Endothelial cell of umbilical vein (primary cell): ENCODE measurements at regions of chr2 and their contacts with region 1.

Region 1: GRCh38 chr2:55885129-55885943 is 38.2 kb downstream of the EFEMP1 start:
- DNase-seq: peak; percentile 95
- H3K4me3 ChIP-seq: no peak overlapping the region
- H3K27ac ChIP-seq: peak overlapping the region; percentile 97
- H3K4me1 ChIP-seq: peaks cover 96% of the 10 kb centered on the region
- H3K27me3 ChIP-seq: no peaks in the 10 kb centered on the region
- CTCF ChIP-seq: no peak
- POLR2A ChIP-seq: peak; percentile 88

Region 2: DNA sequence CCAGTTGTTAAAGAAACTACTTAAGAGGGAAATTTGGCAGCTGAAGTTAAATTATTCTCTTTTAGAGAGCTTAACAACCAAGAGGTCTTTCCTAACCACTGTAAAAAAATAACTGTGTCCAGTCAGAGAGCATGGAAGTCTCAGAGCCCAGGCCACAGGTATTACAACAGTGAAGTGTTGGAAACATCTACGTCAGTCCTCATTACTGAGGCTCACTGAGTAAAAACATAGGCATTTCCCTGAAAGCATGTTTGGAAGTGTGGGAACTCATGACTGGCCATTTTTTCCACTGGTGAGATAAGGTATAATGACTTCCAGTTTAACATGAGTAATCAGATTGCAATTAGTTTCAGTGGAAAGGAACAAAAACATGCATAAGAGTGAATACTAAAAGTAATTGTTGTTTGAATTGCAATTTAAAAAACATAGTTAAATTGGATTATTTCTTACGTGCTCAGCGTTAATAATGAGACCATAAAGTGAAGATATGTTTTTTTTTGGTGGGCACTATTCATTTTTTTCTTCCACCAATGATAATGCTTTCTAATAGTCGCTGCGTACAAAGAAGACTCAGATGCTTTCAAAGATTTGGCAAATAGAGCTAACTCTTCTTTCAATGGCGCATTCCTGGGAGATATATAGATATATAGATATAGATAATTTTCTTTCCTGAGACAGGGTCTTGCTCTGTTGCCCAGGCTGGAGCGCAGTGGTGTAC is 22.5 kb before region 1 on chr2:
- CTCF ChIA-PET with region 1: no interaction called
- POLR2A ChIA-PET with region 1: no interaction called
- dilution Hi-C with region 1: no loop called
- intact Hi-C with region 1: loop called (anchors 1 kb)
- DNase-seq: peak; percentile 98
- H3K4me3 ChIP-seq: no peak overlapping the region
- H3K27ac ChIP-seq: peak overlapping the region; percentile 92
- H3K4me1 ChIP-seq: peaks cover 54% of the 10 kb centered on the region
- H3K27me3 ChIP-seq: no peaks in the 10 kb centered on the region
- CTCF ChIP-seq: no peak
- POLR2A ChIP-seq: peak; percentile 80

Region 3: GRCh38 chr2:55923091-55923981 is 38.0 kb after region 1 on chr2 and contains the start of gene EFEMP1:
- CTCF ChIA-PET with region 1: no interaction called
- POLR2A ChIA-PET with region 1: no interaction called
- dilution Hi-C with region 1: no loop called
- intact Hi-C with region 1: loop called (anchors 5 kb)
- DNase-seq: peak; percentile 87
- H3K4me3 ChIP-seq: peak within 1 kb of the TSS; percentile 57 to 97 (median 91)
- H3K27ac ChIP-seq: peak within 1 kb of the TSS; percentile 82
- H3K4me1 ChIP-seq: peaks cover 43% of the 10 kb centered on the region
- H3K27me3 ChIP-seq: no peaks in the 10 kb centered on the region
- CTCF ChIP-seq: peak in 1 of 2 donors; percentile 4
- POLR2A ChIP-seq: peak; percentile 96
- total RNA-seq, gene EFEMP1: 2,354 and 2,981 TPM in 2 replicates